Activated CD4-positive, alpha-beta memory T cell treated with anti-CD3 and anti-CD28 coated beads for 36 hours (primary cell): ENCODE measurements at regions of chr2 and their contacts with region 1.

Region 1: GRCh38 chr2:147843864-147844696 is 749 bp upstream of the ACVR2A start:
- DNase-seq: peak; percentile 91
- H3K4me3 Mint-ChIP-seq: peak overlapping the region; percentile 89
- H3K27ac Mint-ChIP-seq: peak overlapping the region; percentile 63
- H3K4me1 Mint-ChIP-seq: peaks cover 28% of the 10 kb centered on the region
- H3K27me3 Mint-ChIP-seq: peaks cover 8% of the 10 kb centered on the region

Region 2: GRCh38 chr2:147236601-147237000 is 607.5 kb before region 1 on chr2:
- CTCF ChIA-PET with region 1: no interaction called
- POLR2A ChIA-PET with region 1: no interaction called
- intact Hi-C with region 1: no loop called
- DNase-seq: no peak
- H3K4me3 Mint-ChIP-seq: no peak overlapping the region
- H3K27ac Mint-ChIP-seq: no peak overlapping the region
- H3K4me1 Mint-ChIP-seq: peaks cover 3% of the 10 kb centered on the region
- H3K27me3 Mint-ChIP-seq: no peaks in the 10 kb centered on the region

Region 3: GRCh38 chr2:147288131-147288530 is 555.9 kb before region 1 on chr2:
- CTCF ChIA-PET with region 1: no interaction called
- POLR2A ChIA-PET with region 1: no interaction called
- intact Hi-C with region 1: loop called (anchors 1 kb)
- DNase-seq: peak; percentile 41
- H3K4me3 Mint-ChIP-seq: no peak overlapping the region
- H3K27ac Mint-ChIP-seq: peak overlapping the region; percentile 59
- H3K4me1 Mint-ChIP-seq: peaks cover 45% of the 10 kb centered on the region
- H3K27me3 Mint-ChIP-seq: no peaks in the 10 kb centered on the region

Region 4: DNA sequence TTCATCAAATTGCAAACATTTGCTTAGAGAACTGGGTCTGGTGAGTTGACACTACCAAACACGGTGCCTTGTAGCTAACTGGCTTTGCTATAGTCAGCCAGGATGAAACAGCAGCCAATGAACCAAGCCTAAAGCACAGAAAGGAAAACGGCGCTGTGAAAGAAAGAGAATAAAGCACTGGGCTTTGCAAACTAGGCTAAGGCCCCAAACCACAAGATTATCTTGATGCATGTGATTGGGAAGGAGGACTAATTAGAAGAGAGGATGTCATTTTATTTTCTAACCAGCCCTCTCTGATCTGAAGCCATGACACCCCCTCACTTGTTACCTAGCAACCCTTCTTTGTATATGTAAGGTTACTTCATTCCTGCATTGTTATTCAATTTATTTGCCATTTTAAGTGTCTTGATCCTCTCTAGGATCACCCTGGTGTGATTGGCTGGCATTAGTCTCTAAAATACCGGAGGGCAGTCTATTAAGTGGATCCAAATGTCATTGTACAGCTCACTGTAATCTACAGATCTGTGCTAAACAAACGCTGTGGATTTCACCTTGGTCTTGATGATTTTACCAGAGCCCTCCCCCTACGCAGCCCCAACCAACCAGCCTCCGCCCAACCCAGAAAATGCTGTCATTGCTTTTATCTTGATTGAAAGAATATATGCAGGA is 394.6 kb before region 1 on chr2:
- CTCF ChIA-PET with region 1: interaction called, 3 read pairs
- POLR2A ChIA-PET with region 1: no interaction called
- intact Hi-C with region 1: loop called (anchors 2 kb)
- DNase-seq: peak; percentile 53
- H3K4me3 Mint-ChIP-seq: peak overlapping the region; percentile 27
- H3K27ac Mint-ChIP-seq: peak overlapping the region; percentile 68
- H3K4me1 Mint-ChIP-seq: peaks cover 17% of the 10 kb centered on the region
- H3K27me3 Mint-ChIP-seq: no peaks in the 10 kb centered on the region

Region 5: GRCh38 chr2:147632198-147632597 is 211.9 kb before region 1 on chr2:
- CTCF ChIA-PET with region 1: interaction called, 4 read pairs
- POLR2A ChIA-PET with region 1: no interaction called
- intact Hi-C with region 1: loop called (anchors 2 kb)
- DNase-seq: no peak
- H3K4me3 Mint-ChIP-seq: no peak overlapping the region
- H3K27ac Mint-ChIP-seq: no peak overlapping the region
- H3K4me1 Mint-ChIP-seq: peaks cover 46% of the 10 kb centered on the region
- H3K27me3 Mint-ChIP-seq: no peaks in the 10 kb centered on the region

Region 6: DNA sequence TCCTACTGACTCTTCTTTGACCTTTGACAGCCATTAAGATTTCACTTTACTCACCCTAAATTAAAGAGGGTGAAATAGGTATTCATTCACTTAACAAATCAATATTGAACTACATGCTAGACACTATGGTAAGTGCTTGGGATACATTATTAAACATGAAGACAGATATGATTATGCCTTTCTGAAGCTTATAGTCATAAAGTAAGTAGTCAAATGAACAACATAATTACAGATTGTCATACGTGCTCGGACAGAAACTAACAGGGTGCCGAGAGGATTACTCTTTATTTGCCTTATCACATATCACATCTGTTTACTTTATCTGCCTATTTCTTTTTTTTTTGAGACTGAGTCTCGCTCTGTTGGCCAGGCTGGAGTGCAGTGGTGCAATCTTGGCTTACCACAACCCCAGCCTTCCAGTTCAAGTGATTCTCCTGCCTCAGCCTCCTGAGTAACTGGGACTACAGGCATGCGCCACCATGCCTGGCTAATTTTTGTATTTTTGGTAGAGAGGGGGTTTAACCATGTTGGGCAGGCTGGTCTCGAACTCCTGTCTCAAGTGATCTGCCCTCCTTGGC is 10.6 kb after region 1 on chr2:
- CTCF ChIA-PET with region 1: interaction called, 3 read pairs
- POLR2A ChIA-PET with region 1: no interaction called
- intact Hi-C with region 1: loop called (anchors 1 kb)
- DNase-seq: no peak
- H3K4me3 Mint-ChIP-seq: no peak overlapping the region
- H3K27ac Mint-ChIP-seq: no peak overlapping the region
- H3K4me1 Mint-ChIP-seq: peaks cover 53% of the 10 kb centered on the region
- H3K27me3 Mint-ChIP-seq: no peaks in the 10 kb centered on the region

Region 7: GRCh38 chr2:147884830-147885229 is 40.8 kb after region 1 on chr2:
- CTCF ChIA-PET with region 1: no interaction called
- POLR2A ChIA-PET with region 1: no interaction called
- intact Hi-C with region 1: loop called (anchors 2 kb)
- DNase-seq: no peak
- H3K4me3 Mint-ChIP-seq: no peak overlapping the region
- H3K27ac Mint-ChIP-seq: no peak overlapping the region
- H3K4me1 Mint-ChIP-seq: peaks cover 44% of the 10 kb centered on the region
- H3K27me3 Mint-ChIP-seq: no peaks in the 10 kb centered on the region